ENCODE measurements at regions of chr9 and their contacts with region 1.

Region 1: DNA sequence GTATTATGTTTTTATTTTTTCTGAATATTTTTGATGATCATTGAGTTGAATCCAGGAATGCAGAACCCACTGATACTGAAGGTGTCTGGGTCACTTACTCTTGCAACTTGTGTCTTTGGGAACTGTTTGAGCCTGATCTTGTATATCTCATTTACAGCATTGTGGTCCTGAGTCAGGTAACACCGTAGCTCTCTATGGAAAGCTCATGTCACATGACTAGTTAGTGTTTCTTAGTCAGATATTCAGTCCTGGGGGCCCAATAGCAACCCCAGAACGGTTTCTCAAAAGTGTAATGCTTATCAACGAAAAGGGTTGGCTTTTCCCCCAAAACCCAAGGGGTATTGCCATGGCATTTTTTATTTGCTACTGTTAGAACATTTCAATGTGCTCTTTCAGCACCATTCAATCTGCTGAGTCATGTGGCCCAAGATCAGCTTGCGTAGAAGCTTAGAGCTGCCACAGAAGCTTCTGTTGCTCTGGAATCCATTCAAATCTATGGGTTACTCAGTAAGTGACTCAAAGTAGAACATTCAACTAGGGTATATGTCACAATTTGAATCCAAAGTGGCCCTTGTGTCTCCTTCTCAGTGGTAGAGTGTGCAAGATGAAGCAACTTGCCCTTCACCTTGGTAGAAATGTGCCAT is 12.1 kb upstream of the PTAR1 start:
- DNase-seq: no peak
- ATAC-seq: no peak
- H3K4me3 ChIP-seq: no peak overlapping the region
- H3K27ac ChIP-seq: no peak overlapping the region
- H3K4me1 ChIP-seq: no peaks in the 10 kb centered on the region
- H3K27me3 ChIP-seq: no peaks in the 10 kb centered on the region
- CTCF ChIP-seq: no peak
- POLR2A ChIP-seq: no peak

Region 2: DNA sequence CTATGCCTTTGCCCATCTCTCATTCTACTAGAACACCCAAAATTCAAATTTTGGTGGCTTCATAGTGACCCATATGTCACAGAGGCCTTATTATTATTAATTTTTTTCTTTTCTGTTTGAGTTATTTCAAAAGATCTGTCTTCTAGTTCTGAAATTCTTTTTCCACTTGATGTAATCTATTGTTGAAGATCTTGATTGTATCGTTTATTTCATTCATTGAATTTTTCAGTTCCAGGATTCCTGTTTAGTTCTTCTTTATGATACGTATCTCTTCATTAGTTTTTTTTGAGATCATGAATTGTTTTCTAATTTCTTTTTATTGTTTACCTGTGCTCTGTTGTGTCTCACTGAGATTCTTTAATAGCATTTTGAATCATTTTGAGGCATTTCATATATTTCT is 75.1 kb before region 1 on chr9:
- intact Hi-C with region 1: loop called (anchors 5 kb)
- DNase-seq: no peak
- ATAC-seq: no peak
- H3K4me3 ChIP-seq: no peak overlapping the region
- H3K27ac ChIP-seq: no peak overlapping the region
- H3K4me1 ChIP-seq: no peaks in the 10 kb centered on the region
- H3K27me3 ChIP-seq: no peaks in the 10 kb centered on the region
- CTCF ChIP-seq: no peak
- POLR2A ChIP-seq: no peak

Measured in body of pancreas (tissue), 4 donors.